Activated naive CD4-positive, alpha-beta T cell treated with anti-CD3 and anti-CD28 coated beads for 36 hours (primary cell): ENCODE measurements at regions of chr4 and their contacts with region 1.

Region 1: GRCh38 chr4:152545088-152545487 is 9.2 kb upstream of the FBXW7 start:
- DNase-seq: no peak
- H3K4me3 Mint-ChIP-seq: no peak overlapping the region
- H3K27ac Mint-ChIP-seq: no peak overlapping the region
- H3K4me1 Mint-ChIP-seq: peaks cover 19% of the 10 kb centered on the region
- H3K27me3 Mint-ChIP-seq: no peaks in the 10 kb centered on the region

Region 2: GRCh38 chr4:152559641-152560040 is 14.6 kb after region 1 on chr4:
- CTCF ChIA-PET with region 1: interaction called, 4 read pairs
- intact Hi-C with region 1: loop called (anchors 1 kb)
- DNase-seq: no peak
- H3K4me3 Mint-ChIP-seq: no peak overlapping the region
- H3K27ac Mint-ChIP-seq: no peak overlapping the region
- H3K4me1 Mint-ChIP-seq: peaks cover 15% of the 10 kb centered on the region
- H3K27me3 Mint-ChIP-seq: no peaks in the 10 kb centered on the region